MCF 10A (cell line): ENCODE measurements at regions of chr13 and their contacts with region 1.

Region 1: DNA sequence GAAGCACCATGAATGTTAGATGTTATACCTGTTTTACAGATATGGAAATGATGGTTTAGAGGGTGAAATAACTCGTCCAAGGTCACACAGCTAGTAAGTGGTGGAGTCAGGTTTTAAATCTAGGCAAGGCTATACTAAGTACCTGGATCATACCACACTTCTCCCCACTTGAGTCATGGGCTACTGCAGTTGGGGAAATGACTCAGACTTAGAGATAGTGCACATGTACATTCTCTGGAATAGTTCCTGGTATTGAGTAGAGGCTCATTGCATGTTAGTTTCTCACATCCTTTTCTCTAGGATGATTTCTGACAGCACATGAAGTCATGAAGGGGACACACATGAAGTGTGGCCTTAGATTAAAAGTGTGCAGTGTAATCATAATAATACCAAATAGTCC is 76.2 kb upstream of the TNFSF11 start:
- DNase-seq: peak; percentile 78
- H3K4me3 Mint-ChIP-seq: no peak overlapping the region
- H3K27ac Mint-ChIP-seq: no peak overlapping the region
- H3K4me1 Mint-ChIP-seq: peaks cover 13% of the 10 kb centered on the region
- H3K27me3 Mint-ChIP-seq: no peaks in the 10 kb centered on the region
- CTCF ChIP-seq: no peak

Region 2: DNA sequence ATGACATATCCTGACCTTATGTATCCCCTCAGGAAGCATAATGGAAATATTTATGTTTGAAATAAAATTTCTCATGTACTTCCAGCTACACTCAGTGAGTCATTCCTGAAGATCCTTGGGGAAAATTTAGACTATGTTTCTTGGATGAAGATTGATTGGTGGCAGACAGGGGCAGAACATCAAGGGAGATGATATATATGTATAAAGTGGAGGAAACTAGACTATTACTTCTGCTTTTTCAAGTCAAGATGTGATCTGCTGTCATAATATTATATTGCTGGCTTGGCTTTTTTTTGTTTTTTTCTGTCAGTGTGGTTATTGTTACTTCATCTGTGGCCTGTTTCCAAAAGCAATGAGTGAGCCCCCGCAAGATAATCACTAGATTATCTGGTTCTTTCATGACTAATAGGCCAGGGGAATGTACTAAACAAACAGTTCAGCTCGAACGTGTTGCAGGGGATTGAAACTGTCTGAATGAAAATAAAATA is 11.0 kb before region 1 on chr13:
- CTCF ChIA-PET with region 1: interaction called, 3 read pairs
- POLR2A ChIA-PET with region 1: interaction called, 4 read pairs
- intact Hi-C with region 1: loop called (anchors 1 kb)
- DNase-seq: peak; percentile 89
- H3K4me3 Mint-ChIP-seq: peak overlapping the region; percentile 33
- H3K27ac Mint-ChIP-seq: peak overlapping the region; percentile 24
- H3K4me1 Mint-ChIP-seq: peaks cover 48% of the 10 kb centered on the region
- H3K27me3 Mint-ChIP-seq: no peaks in the 10 kb centered on the region
- CTCF ChIP-seq: no peak